ENCODE measurements at regions of chr1 and their contacts with region 1.

Region 1: GRCh38 chr1:232630047-232630893 is at the start of gene SIPA1L2:
- H3K4me3 Mint-ChIP-seq: peak within 1 kb of the TSS; percentile 86
- H3K27ac Mint-ChIP-seq: peak within 1 kb of the TSS; percentile 86
- H3K4me1 Mint-ChIP-seq: peaks cover 47% of the 10 kb centered on the region
- H3K27me3 Mint-ChIP-seq: no peaks in the 10 kb centered on the region

Region 2: DNA sequence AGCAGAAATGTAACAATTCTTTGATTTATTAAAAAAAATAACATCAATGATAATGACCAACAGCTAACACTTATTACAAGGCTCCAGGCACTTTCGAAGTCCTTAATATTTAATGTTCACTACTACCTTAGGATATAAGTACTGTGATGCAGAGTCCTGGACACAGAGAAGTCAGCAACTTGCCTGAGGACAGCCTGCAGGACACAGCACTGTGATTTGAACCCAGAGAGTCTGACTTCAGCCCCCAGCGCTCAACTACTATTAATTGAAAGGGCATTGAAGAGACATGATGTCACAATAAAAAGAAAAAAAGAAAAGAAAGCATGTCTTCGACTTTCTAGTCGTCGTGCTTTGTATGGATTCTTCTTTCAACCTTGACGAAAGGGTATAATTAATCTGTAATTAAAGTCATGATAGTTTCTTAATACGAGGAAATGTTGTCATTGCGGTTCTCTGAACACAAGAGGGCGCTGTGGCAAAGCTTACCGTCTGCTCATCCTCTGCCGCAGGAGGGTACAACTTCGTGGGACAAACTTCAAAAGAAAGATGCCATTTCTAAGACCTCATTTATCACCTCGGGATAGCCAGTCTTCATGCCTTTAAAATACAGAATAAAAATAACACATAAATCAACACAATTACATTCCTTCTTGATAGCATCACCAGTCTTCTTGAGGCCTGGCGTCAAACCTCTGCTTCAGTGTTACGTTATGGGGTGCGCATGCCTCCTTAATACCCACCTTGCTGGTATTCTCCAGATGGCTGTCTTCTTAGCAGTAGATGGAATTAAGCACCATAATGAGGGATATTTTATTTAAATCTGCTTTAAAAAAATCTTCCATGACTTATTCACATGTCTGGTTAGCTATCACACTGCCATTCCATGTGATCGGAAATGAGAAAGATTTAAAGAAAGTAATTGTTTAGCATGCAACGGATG is 763.6 kb before region 1 on chr1:
- intact Hi-C with region 1: loop called (anchors 5 kb)
- H3K4me3 Mint-ChIP-seq: no peak overlapping the region
- H3K27ac Mint-ChIP-seq: peak overlapping the region; percentile 71
- H3K4me1 Mint-ChIP-seq: peaks cover 42% of the 10 kb centered on the region
- H3K27me3 Mint-ChIP-seq: no peaks in the 10 kb centered on the region

Region 3: DNA sequence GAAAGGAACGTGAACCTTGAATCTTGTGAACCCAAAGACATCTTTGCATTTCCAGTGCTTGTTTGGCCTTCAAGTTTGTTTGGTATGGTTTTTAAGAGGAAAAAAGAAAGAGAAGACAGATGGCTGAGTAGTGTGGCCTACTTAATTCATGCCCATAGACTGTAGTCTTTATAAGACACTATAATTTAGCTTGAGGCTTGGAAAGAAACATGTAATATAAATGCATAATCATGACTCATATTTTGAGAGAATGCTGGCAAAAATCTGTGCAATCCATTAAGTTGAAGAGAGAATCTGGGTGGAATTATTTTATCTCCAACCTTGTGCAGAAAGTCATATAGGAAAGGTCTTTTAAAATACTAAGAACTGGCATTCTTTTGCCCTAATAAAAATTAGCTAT is 179.7 kb before region 1 on chr1:
- intact Hi-C with region 1: loop called (anchors 5 kb)
- H3K4me3 Mint-ChIP-seq: no peak overlapping the region
- H3K27ac Mint-ChIP-seq: no peak overlapping the region
- H3K4me1 Mint-ChIP-seq: peaks cover 32% of the 10 kb centered on the region
- H3K27me3 Mint-ChIP-seq: no peaks in the 10 kb centered on the region

Region 4: GRCh38 chr1:232950197-232951176 is 320.2 kb after region 1 on chr1 and contains the start of gene NTPCR:
- intact Hi-C with region 1: loop called (anchors 5 kb)
- H3K4me3 Mint-ChIP-seq: peak within 1 kb of the TSS; percentile 87
- H3K27ac Mint-ChIP-seq: peak within 1 kb of the TSS; percentile 95
- H3K4me1 Mint-ChIP-seq: peaks cover 39% of the 10 kb centered on the region
- H3K27me3 Mint-ChIP-seq: no peaks in the 10 kb centered on the region

Region 5: DNA sequence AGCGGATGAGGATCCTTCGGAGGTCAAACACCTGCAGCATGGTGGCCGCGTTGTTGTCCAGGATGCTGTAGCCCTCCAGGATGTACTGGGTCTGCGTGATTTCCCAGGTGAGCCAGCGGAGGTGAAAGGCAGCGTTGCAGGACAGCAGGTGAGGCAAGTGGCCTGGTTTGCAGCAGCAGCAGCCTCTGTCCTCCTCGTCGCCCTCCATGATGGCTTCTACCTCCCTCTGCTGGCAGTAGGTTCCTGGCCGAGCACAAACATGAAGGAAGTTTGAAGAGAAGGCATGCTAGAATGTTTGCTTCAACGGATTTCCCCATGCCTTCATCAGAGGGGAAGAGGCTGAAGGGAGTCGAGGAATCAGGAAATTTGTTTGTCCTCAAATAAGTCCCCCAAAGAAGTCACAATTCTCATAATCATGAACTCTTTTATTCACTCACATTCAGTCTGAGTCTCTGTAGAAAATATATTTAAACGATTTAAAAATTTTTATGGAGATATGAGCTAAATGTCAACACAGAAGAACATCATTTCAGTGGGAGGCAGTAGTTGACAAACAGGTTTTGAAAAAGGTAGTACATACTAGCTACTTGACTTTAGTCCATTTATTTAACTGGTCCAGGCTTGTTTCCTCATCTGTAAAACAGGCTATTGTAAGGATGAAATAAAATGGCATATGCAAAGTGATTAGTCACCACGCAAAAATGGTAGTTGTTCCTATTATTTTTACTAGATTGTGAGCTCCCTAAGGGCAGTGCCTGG is 395.1 kb after region 1 on chr1:
- intact Hi-C with region 1: loop called (anchors 10 kb)
- H3K4me3 Mint-ChIP-seq: no peak overlapping the region
- H3K27ac Mint-ChIP-seq: no peak overlapping the region
- H3K4me1 Mint-ChIP-seq: peaks cover 19% of the 10 kb centered on the region
- H3K27me3 Mint-ChIP-seq: peaks cover 2% of the 10 kb centered on the region

Region 6: DNA sequence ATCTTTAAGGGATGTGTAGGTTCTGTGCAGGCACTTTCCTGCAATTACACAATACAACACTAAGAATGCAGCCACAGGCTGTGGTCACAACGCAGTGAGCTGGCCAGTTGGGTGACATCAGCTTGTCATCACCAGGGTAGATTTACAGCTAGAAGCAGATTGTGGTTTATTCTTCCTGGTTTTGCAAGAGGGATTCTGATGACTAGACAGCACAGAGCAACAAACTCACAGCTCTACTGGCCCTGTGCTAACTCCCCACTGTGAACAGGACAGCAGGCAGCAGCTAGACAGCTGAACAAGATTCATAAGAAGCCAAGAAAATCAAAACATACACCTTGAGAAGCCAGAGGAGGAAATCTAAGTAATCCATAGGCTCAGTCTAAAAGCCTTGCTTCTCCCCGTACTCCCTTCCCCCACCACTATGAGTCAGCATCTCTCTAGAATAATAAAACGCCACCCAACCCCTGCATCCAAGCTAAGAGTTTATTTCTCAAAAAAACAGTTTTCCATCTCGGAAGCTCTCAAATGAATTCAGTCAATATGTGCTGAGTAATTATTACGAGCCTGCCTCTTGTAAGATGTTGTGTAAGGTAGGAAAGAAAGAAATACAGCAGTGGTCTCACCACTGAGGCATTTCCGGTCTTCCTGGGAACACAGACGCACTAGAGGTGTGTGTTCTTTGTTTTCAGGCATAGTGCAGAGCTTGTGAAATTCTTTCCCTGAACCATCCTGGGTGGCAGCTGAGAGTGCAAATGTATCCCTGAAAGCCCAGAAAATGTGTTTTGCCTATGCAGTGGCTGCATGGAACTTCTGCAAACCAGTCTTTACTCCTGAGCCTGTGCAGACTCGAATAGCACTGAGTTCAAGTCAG is 483.0 kb after region 1 on chr1:
- intact Hi-C with region 1: loop called (anchors 5 kb)
- H3K4me3 Mint-ChIP-seq: peak overlapping the region; percentile 69
- H3K27ac Mint-ChIP-seq: peak overlapping the region; percentile 99
- H3K4me1 Mint-ChIP-seq: peaks cover 54% of the 10 kb centered on the region
- H3K27me3 Mint-ChIP-seq: no peaks in the 10 kb centered on the region